A549 (cell line): ENCODE measurements at regions of chr9 and their contacts with region 1.

Region 1: DNA sequence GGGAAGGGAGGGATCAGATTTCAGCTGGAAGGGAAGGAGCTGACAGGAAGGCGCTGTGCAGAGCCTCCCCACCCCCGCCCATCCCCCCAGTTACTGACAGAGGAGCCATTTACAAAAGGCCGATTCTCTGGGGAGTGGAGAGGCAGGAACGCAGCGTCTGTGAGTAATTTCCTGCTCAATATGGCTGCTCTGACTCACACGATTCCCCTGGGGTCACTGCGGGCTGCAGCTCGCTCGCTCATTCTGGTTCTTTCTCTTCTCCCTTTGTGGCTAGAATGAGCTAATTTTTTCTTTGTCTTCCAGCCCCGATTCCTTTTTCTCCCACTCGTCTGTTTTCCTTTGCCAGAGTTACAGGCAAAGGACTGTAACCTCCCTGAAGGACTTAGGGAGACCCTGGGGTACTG is 28.8 kb downstream of the PTPA start:
- DNase-seq: peak; percentile 95 to 97
- ATAC-seq: peak; percentile 81 to 82
- H3K4me3 ChIP-seq: peak overlapping the region; percentile 44
- H3K27ac ChIP-seq: peak overlapping the region; percentile 99
- H3K4me1 ChIP-seq: peaks cover 60% of the 10 kb centered on the region
- CTCF ChIP-seq: no peak
- EP300 ChIP-seq: peak in 1 of 2 experiments; percentile 62; a peak in 1 of 5 replicates
- POLR2A ChIP-seq: peak; percentile 45
- RAD21 ChIP-seq: peak in 1 of 2 experiments; percentile 30; a peak in 2 of 5 replicates

Region 2: DNA sequence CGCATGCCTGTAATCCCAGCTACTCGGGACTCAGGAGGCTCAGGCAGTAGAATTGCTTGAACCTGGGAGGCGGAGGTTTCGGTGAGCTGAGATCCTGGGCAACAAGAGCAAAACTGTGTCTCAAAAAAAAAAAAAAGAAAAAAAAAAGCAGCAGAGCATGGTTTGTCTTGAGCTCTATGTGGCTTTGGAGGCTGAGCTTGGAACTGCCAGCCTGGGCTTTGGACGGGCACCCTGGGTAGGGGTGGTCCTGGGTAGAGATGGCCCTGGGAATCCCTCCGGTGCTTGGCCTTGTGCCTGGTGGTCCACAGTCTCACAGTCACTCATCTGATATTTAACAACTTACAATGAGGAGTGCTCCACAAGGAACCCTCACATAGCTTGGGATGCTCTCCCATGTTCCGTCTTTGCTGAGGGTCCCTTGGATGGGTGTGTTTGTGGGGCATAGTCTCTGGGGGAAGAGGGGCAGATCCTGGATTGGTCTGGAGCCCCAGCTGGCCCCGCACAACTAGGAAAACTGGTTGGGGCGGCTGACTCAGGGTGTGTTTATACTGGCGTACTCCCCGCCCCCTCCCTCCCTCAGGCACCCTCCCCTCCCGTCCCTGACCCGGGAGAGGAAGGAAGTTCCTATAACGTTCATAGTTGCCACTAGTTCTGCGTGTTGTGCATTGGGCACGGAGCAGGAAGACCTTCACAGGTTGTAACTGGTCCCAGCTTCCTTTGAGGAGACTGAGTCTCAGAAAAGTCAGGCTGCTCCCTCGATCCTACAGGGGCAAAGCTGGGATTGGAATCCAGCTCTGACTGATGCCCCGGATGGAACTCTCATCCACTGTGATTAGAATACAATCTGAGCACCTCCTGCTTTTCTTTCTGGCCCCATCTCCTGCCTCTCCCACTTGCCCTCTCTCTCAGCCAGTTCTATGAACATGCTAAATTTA is 26.9 kb after region 1 on chr9:
- CTCF ChIA-PET with region 1: interaction called, 1,029 read pairs
- POLR2A ChIA-PET with region 1: interaction called, 10 read pairs
- DNase-seq: peak; percentile 79 to 97
- ATAC-seq: peak; percentile 79 to 88
- H3K4me3 ChIP-seq: peak overlapping the region; percentile 9; the same call in 1 of the 3 replicates
- H3K27ac ChIP-seq: peak overlapping the region; percentile 94 to 99
- H3K4me1 ChIP-seq: peaks cover 48% of the 10 kb centered on the region
- CTCF ChIP-seq: no peak
- EP300 ChIP-seq: no peak
- POLR2A ChIP-seq: peak; percentile 70
- RAD21 ChIP-seq: no peak

Region 3: GRCh38 chr9:129482521-129483414 is 342.8 kb after region 1 on chr9:
- CTCF ChIA-PET with region 1: interaction called, 53 read pairs
- POLR2A ChIA-PET with region 1: interaction called, 12 read pairs
- DNase-seq: peak in 1 of 2 experiments; percentile 86
- ATAC-seq: peak; percentile 47 to 64
- H3K4me3 ChIP-seq: peak overlapping the region; percentile 47
- H3K27ac ChIP-seq: peak overlapping the region; percentile 99 to 100
- H3K4me1 ChIP-seq: peaks cover 90% of the 10 kb centered on the region
- CTCF ChIP-seq: no peak; the same call in 2 of the 3 replicates
- EP300 ChIP-seq: peak; percentile 71 to 93; a peak in 4 of 5 replicates
- POLR2A ChIP-seq: peak; percentile 29; the same call in 1 of the 2 replicates
- RAD21 ChIP-seq: peak in 1 of 2 experiments; percentile 43; a peak in 2 of 5 replicates

Region 4: GRCh38 chr9:129489838-129490582 is 350.0 kb after region 1 on chr9:
- CTCF ChIA-PET with region 1: interaction called, 53 read pairs
- POLR2A ChIA-PET with region 1: interaction called, 4 read pairs
- DNase-seq: peak in 1 of 2 experiments; percentile 68
- ATAC-seq: peak; percentile 0; a peak in 3 of 6 replicates
- H3K4me3 ChIP-seq: peak overlapping the region; percentile 41
- H3K27ac ChIP-seq: peak overlapping the region; percentile 99 to 100
- H3K4me1 ChIP-seq: peaks cover 95% of the 10 kb centered on the region
- CTCF ChIP-seq: no peak
- EP300 ChIP-seq: no peak
- POLR2A ChIP-seq: peak; percentile 53
- RAD21 ChIP-seq: no peak

Region 5: GRCh38 chr9:129569502-129570449 is 429.8 kb after region 1 on chr9:
- CTCF ChIA-PET with region 1: interaction called, 21 read pairs
- POLR2A ChIA-PET with region 1: no interaction called
- DNase-seq: peak; percentile 70 to 90
- ATAC-seq: peak; percentile 38 to 48
- H3K4me3 ChIP-seq: no peak overlapping the region
- H3K27ac ChIP-seq: peak overlapping the region; percentile 99 to 100
- H3K4me1 ChIP-seq: peaks cover 48% of the 10 kb centered on the region
- CTCF ChIP-seq: peak; percentile 42
- EP300 ChIP-seq: no peak
- POLR2A ChIP-seq: peak; percentile 17; the same call in 1 of the 2 replicates
- RAD21 ChIP-seq: peak; percentile 27 to 44; a peak in 2 of 5 replicates

Region 6: DNA sequence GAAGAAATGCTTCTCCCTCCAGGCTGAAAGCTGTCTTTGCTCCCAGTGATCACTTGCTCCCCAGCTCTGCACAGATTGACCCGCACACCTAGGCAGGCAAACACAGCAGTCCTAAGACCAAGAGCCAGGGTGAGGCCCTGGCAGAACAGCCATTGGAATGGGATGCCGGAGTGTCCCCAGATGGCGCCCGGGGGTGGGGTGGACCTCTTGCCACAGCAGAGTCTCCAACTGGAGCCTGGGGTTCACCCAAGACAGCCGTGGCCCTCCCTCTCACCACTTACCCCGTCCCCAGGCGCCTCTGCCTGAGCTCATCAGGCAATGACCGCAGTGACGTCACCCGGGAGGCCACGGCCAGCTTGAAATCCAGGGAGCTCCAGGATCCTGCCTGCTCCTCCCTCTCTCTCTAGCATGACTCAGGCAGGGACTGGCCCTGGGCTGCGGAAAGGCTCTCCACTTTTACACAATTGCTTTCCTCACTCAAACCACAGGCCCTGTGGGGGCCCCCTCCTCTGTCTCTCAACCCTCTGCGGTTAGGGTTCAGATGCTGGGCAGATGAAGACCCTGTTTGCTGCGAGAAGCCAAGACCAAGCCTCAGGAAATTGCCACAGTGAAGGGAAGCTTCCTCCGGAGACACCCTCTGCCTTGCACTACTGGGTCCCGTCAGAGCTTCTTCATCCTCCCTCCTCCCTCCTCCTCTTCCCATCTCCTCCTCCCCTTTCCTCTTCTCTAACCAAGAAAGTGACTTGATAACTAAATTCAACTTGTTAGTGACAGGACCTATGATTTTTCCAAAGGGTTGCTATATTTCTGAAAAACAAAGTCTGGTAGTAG is 637.2 kb after region 1 on chr9:
- CTCF ChIA-PET with region 1: interaction called, 15 read pairs
- POLR2A ChIA-PET with region 1: no interaction called
- DNase-seq: peak; percentile 96 to 99
- ATAC-seq: peak; percentile 95 to 97
- H3K4me3 ChIP-seq: 0 out of 3 replicates have a peak overlapping the region, but pooled peaks have one; percentile 11
- H3K27ac ChIP-seq: peak overlapping the region; percentile 88 to 89
- H3K4me1 ChIP-seq: peaks cover 66% of the 10 kb centered on the region
- CTCF ChIP-seq: no peak
- EP300 ChIP-seq: peak; percentile 55 to 89; a peak in 3 of 5 replicates
- POLR2A ChIP-seq: peak; percentile 42
- RAD21 ChIP-seq: peak in 1 of 2 experiments; percentile 26; a peak in 1 of 5 replicates